Natural killer cell (primary cell): ENCODE measurements at regions of chr22 and their contacts with region 1.

Region 1: GRCh38 chr22:33639588-33640254 is 280.6 kb downstream of the LARGE1 start:
- DNase-seq: no peak
- ATAC-seq: no peak
- H3K4me3 ChIP-seq: no peak overlapping the region
- H3K4me3 Mint-ChIP-seq: no peak overlapping the region
- H3K27ac ChIP-seq: no peak overlapping the region
- H3K27ac Mint-ChIP-seq: no peak overlapping the region
- H3K4me1 ChIP-seq: no peaks in the 10 kb centered on the region
- H3K4me1 Mint-ChIP-seq: no peaks in the 10 kb centered on the region
- H3K27me3 ChIP-seq: no peaks in the 10 kb centered on the region
- H3K27me3 Mint-ChIP-seq: no peaks in the 10 kb centered on the region
- CTCF ChIP-seq: no peak

Region 2: DNA sequence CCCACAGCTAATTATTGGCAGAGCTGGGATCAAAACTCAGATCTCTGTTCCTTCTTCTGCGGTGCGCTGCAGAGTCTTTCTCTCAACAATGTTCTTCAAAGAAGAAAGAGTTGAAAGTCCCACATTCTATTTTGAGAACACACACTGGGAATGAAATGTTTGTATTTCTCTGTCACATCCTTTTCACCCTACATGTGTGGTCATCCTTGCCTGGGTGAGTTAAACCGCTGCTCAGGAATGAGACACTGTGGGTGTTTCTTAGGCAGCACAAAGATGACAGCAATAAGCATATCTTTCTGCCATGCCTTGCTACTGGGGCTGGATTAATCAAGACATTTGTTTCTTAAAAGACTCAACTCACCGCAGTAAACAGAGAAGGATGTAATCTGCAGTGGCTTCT is 57.9 kb after region 1 on chr22:
- intact Hi-C with region 1: loop called (anchors 10 kb)
- DNase-seq: no peak
- ATAC-seq: no peak
- H3K4me3 ChIP-seq: no peak overlapping the region
- H3K4me3 Mint-ChIP-seq: no peak overlapping the region
- H3K27ac ChIP-seq: no peak overlapping the region
- H3K27ac Mint-ChIP-seq: no peak overlapping the region
- H3K4me1 ChIP-seq: no peaks in the 10 kb centered on the region
- H3K4me1 Mint-ChIP-seq: no peaks in the 10 kb centered on the region
- H3K27me3 ChIP-seq: no peaks in the 10 kb centered on the region
- H3K27me3 Mint-ChIP-seq: no peaks in the 10 kb centered on the region
- CTCF ChIP-seq: no peak